IMR-90 (cell line): ENCODE measurements at regions of chr6 and their contacts with region 1.

Region 1: DNA sequence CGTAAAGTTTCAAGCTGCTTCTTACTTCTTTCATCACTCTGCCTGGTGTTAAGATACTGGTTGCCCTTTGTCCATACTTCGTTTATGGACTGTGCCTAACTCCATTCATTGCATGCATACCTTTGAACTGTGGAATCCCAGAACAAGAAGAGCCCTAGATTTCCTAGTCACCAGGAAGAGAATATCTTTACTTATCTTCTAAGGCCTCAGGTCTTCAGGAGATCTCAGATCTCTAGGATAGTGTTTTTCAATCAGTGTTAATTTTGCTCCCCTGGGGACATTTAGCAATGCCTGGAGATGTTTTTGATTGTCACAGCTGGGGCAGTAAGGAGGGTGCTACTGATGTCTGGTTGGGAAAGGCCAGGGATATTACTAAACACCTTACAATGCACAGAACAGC is 35.5 kb upstream of the GJA1 start:
- DNase-seq: no peak
- ATAC-seq: no peak
- H3K4me3 ChIP-seq: no peak overlapping the region
- H3K27ac ChIP-seq: no peak overlapping the region
- H3K4me1 ChIP-seq: no peaks in the 10 kb centered on the region
- H3K27me3 ChIP-seq: no peaks in the 10 kb centered on the region; the same call in 1 of the 2 replicates
- CTCF ChIP-seq: no peak
- POLR2A ChIP-seq: no peak
- RAD21 ChIP-seq: no peak

Region 2: GRCh38 chr6:121413879-121414278 is 13.9 kb after region 1 on chr6:
- CTCF ChIA-PET with region 1: interaction called, 5 read pairs
- POLR2A ChIA-PET with region 1: interaction called, 13 read pairs
- dilution Hi-C with region 1: no loop called
- in situ Hi-C with region 1: no loop called
- intact Hi-C with region 1: no loop called
- DNase-seq: no peak
- ATAC-seq: no peak
- H3K4me3 ChIP-seq: no peak overlapping the region
- H3K27ac ChIP-seq: no peak overlapping the region
- H3K4me1 ChIP-seq: no peaks in the 10 kb centered on the region
- H3K27me3 ChIP-seq: no peaks in the 10 kb centered on the region
- CTCF ChIP-seq: no peak
- POLR2A ChIP-seq: no peak
- RAD21 ChIP-seq: no peak